MCF 10A (cell line): ENCODE measurements at regions of chr12 and their contacts with region 1.

Region 1: DNA sequence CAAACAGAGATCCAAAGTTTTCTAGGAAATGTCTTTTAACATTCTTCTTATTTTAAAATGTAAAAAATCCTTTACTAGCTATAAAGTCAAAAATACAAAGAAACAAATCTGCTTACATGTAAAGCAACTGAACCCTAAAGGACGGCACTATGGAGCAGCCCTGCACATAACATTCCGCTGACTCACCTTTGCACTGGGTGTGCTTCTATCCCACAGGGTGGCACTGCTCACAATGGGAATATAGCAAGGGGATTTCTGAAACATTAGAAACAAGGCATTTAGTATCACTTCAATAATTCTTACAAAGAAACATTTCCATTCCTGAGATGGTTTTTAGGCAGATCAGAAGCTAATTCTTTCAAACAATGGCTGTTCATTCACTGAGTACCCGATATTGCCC is 94.3 kb downstream of the C12orf42 start:
- DNase-seq: peak; percentile 60
- H3K4me3 Mint-ChIP-seq: no peak overlapping the region
- H3K27ac Mint-ChIP-seq: no peak overlapping the region
- H3K4me1 Mint-ChIP-seq: peaks cover 5% of the 10 kb centered on the region
- H3K27me3 Mint-ChIP-seq: no peaks in the 10 kb centered on the region
- CTCF ChIP-seq: peak; percentile 14

Region 2: GRCh38 chr12:103415681-103416080 is 14.3 kb after region 1 on chr12:
- CTCF ChIA-PET with region 1: interaction called, 10 read pairs
- POLR2A ChIA-PET with region 1: interaction called, 3 read pairs
- intact Hi-C with region 1: no loop called
- DNase-seq: no peak
- H3K4me3 Mint-ChIP-seq: no peak overlapping the region
- H3K27ac Mint-ChIP-seq: no peak overlapping the region
- H3K4me1 Mint-ChIP-seq: no peaks in the 10 kb centered on the region
- H3K27me3 Mint-ChIP-seq: no peaks in the 10 kb centered on the region
- CTCF ChIP-seq: no peak